Lower leg skin (tissue), 4 donors: ENCODE measurements at regions of chr4 and their contacts with region 1.

Region 1: DNA sequence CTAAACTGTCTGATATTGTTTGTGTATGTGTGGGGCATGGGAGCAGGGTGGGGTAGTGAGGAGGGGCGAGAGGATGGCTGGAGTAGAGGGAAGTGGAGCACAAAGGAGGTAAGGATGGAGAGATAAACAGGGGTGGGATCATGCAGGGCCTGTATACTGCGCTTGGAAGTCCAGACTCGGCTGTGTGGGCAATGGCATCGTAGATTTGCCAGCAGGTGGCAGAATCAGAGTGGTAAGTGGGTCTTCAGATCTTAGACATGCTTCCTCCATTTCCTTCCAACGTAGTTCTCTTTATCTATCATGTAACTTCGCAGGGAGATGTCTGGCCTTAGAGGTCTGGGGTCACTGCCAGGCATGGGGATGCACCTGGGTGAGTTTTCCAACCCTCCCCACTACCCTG is 155.5 kb downstream of the PDGFRA start:
- DNase-seq: no peak
- H3K4me3 ChIP-seq: no peak overlapping the region
- CTCF ChIP-seq: no peak
- POLR2A ChIP-seq: no peak

Region 2: GRCh38 chr4:52954560-52955170 is 1429.9 kb before region 1 on chr4:
- intact Hi-C with region 1: loop called (anchors 5 kb)
- DNase-seq: no peak
- H3K4me3 ChIP-seq: no peak overlapping the region
- CTCF ChIP-seq: no peak
- POLR2A ChIP-seq: no peak

Region 3: DNA sequence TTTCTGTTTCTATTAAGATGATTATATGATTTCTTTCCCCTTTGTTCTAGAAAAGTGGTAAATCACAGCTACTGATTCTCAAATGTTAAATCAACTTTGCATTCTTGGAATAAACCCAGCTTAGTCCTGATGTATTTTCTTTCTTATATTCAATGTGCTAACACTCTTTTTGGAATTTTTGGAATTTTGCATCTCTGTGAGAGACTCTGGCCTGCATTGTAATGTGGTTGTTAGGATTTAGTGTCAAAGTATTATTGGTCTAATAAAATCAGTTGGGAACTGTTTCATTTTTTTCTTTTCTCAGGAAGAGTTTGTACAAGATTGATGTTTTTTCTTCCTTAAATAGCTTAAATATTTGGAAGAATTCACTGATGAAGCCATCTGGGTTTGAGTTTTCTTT is 382.8 kb after region 1 on chr4:
- intact Hi-C with region 1: no loop called
- DNase-seq: no peak
- H3K4me3 ChIP-seq: no peak overlapping the region
- CTCF ChIP-seq: no peak
- POLR2A ChIP-seq: no peak